AG04450 (cell line): ENCODE measurements at regions of chr16 and their contacts with region 1.

Region 1: DNA sequence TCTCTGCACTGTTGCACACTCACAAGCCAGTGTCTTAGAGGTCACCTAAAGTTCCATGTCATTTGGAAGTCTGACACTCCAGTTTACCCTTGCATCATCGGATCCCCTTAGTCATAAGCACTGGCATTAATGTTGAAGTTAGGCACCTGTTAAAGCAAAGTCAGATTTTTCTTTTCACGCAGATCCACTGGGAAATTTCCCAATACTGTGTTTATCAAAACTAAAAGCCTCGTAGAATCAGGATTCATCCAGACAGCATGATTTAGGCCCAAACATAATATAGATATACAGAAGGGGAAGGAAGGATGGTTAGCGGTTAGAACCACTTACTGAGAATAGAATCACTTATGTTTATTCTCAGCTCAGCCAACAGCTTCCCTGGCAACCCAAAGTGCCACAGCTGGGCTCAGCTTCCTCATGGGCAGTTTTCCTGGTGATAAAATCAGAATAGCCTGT is 30.1 kb upstream of the HAPSTR1 start:
- DNase-seq: peak; percentile 74
- H3K4me3 ChIP-seq: no peak overlapping the region
- H3K27ac ChIP-seq: peak overlapping the region; percentile 52
- H3K27me3 ChIP-seq: no peaks in the 10 kb centered on the region
- CTCF ChIP-seq: no peak

Region 2: GRCh38 chr16:8848939-8849391 is 212.4 kb before region 1 on chr16:
- CTCF ChIA-PET with region 1: no interaction called
- POLR2A ChIA-PET with region 1: no interaction called
- DNase-seq: no peak
- H3K4me3 ChIP-seq: no peak overlapping the region
- H3K27ac ChIP-seq: peak overlapping the region; percentile 81
- H3K27me3 ChIP-seq: no peaks in the 10 kb centered on the region
- CTCF ChIP-seq: no peak

Region 3: GRCh38 chr16:9072806-9073341 is 11.5 kb after region 1 on chr16:
- CTCF ChIA-PET with region 1: interaction called, 3 read pairs
- POLR2A ChIA-PET with region 1: interaction called, 10 read pairs
- DNase-seq: peak; percentile 83
- H3K4me3 ChIP-seq: 0 out of 2 replicates have a peak overlapping the region, but pooled peaks have one; percentile 15
- H3K27ac ChIP-seq: peak overlapping the region; percentile 87
- H3K27me3 ChIP-seq: no peaks in the 10 kb centered on the region
- CTCF ChIP-seq: no peak